Psoas muscle (tissue), 8 donors: ENCODE measurements at regions of chr10 and their contacts with region 1.

Region 1: DNA sequence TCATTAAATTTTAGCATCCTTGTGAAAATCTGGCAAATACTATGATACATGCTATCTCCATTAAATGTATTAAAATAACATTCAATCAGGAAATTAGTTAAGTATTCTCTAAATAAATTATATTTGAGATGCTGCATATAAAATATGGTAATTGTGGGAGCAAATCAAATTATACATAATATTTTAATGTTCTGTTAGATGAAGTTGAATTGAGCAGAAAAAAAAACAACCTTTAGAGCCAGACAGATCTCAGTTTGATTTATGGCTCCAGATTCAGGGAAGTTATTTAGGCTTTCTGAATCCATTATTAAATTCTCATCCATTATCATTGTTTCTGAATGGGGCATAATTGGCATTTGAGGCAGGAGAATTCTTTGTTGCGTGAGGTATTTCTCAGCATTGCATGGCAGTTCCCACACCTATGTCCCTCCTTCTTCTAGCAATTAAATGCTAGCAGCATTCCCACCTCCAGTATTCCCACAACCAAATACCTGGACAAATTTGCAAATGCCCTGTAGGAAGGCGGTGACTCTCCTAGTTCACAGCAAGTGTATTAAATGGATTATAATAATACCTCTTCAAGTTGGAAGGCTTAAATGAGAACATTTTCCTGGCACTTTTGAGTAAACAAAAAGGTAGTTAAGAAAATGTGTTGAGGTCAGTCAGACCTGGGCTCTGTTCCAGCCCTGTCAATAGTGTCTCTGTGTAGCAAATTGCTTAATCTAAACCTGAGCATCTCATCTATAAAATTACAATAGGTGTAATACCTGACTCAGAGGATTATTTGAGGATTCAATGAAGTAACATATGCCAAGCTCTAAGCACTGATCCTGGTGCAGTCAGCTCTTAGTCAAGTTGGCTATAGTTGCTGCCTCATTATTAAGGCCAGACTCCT is 108.9 kb downstream of the RNLS start:
- DNase-seq: peak in 1 of 2 donors; percentile 62
- ATAC-seq: peak; percentile 41 to 79 (median 68)
- H3K4me3 ChIP-seq: peak overlapping the region; percentile 33
- H3K27ac ChIP-seq: peak overlapping the region; percentile 54
- H3K4me1 ChIP-seq: peaks cover 31% of the 10 kb centered on the region
- H3K27me3 ChIP-seq: no peaks in the 10 kb centered on the region
- CTCF ChIP-seq: no peak

Region 2: DNA sequence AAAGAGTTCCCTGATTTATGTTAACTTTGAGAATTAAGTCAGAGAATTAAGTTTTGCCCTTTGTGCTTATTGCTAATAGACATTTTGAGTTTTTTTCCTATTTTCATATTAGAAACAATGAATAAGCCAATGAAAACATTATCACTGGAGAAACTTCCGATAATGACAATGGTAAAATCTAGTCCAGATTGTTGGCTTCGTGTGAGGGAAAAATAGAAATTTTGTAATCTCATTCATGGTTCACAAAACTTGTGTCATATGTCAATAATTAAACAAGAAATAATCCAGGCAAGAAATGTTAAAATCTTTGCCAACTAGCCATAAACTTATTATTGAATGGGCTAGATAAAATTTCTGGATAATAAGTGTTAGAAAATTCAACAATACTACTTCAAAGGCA is 72.2 kb after region 1 on chr10:
- intact Hi-C with region 1: loop called in 1 of 2 experiments (anchors 5 kb)
- DNase-seq: no peak
- ATAC-seq: no peak
- H3K4me3 ChIP-seq: no peak overlapping the region
- H3K27ac ChIP-seq: no peak overlapping the region
- H3K4me1 ChIP-seq: no peaks in the 10 kb centered on the region
- H3K27me3 ChIP-seq: no peaks in the 10 kb centered on the region
- CTCF ChIP-seq: no peak

Region 3: DNA sequence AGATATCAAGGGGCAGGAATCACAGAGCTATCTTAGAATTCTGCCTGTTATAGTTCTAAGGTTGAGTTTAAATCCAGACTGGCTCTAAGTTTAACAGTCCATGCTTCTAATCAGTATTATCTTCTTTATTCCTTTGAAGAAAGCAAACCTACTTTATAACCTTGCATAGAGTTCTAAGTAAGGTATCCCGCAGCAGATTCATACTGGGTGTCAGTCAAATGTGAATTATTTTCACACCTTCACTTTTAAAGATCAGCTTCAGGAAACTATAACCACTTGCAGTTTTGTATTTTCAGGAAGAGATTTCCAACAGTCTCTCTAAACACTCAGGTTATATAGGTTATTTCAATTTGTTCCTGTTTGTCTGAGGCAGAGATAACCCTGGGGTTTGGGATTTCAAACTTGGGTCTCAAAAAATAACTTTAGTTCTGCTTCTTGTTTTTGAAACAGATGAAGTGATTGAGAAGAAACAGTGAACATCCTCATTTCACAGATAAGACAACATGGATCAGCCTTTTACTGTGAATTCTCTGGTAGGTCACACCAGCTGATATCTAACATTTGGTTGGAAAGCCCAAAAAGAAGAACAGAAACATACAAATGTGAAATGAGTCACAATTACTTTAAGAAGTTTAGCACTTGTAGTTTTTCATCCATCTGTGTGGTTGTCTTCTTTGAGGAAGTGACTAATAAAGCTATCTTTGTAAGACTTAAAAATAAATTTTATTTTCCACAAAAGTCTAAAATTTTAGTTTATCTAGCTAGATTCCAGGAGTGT is 427.2 kb after region 1 on chr10:
- intact Hi-C with region 1: no loop called
- DNase-seq: no peak
- ATAC-seq: no peak
- H3K4me3 ChIP-seq: no peak overlapping the region
- H3K27ac ChIP-seq: no peak overlapping the region
- H3K4me1 ChIP-seq: no peaks in the 10 kb centered on the region
- H3K27me3 ChIP-seq: no peaks in the 10 kb centered on the region
- CTCF ChIP-seq: no peak